A673 (cell line): ENCODE measurements at regions of chr2 and their contacts with region 1.

Region 1: DNA sequence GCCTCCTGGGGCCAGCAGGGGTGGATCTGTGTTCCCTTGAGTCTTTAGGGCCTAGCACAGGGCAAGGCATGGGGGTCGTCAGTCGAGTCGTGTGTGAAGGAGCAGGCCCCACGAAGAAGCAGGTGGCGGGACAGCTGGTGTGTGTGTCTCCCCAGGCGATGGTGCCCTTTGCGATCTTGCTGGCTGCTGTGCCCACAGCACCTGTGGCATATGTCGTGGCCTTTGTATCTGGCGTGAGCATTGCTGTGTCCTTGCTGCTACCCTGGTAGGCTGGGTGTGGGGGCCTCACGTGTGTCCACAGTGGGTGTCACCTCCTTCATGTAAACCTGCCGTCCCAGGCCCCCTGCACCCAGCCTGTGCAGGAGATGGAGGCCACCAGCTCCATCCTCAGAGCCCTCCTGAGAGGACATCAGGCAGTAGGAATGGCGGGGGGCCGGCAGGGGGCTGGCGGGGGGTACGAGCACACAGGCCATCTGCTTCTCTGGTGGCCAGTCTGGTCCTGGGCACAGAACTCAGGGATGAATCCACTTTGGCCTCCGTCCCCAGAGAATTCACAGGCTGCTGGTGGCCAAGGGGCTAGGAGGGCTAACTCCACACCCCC is 13.2 kb downstream of the MFSD2B start:
- DNase-seq: no peak
- H3K4me3 ChIP-seq: no peak overlapping the region
- H3K27ac ChIP-seq: no peak overlapping the region
- H3K4me1 ChIP-seq: peaks cover 15% of the 10 kb centered on the region
- H3K27me3 ChIP-seq: no peaks in the 10 kb centered on the region
- CTCF ChIP-seq: no peak

Region 2: DNA sequence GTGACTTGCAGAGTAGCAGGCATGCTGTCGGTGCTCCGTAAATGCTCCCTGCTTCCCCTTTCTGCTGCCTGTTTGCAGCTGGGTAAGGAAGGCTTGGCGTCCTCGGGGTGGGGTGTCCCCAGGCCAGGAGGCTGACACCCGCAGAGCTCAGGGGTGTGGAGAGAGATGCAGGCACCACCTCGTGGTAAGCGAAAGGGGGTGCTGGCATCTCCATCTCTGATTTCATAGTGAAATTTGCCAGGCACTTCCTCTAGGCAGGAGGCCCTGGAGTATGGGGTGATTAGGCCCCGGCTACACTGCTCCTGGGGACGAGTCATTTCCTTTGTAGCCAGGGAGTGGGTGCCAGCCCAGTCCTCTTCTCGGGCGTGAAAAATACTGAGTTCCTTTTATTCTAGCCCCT is 477.7 kb before region 1 on chr2:
- CTCF ChIA-PET with region 1: no interaction called
- POLR2A ChIA-PET with region 1: no interaction called
- intact Hi-C with region 1: no loop called
- DNase-seq: peak; percentile 71
- H3K4me3 ChIP-seq: no peak overlapping the region
- H3K27ac ChIP-seq: peak overlapping the region; percentile 3
- H3K4me1 ChIP-seq: peaks cover 66% of the 10 kb centered on the region
- H3K27me3 ChIP-seq: no peaks in the 10 kb centered on the region
- CTCF ChIP-seq: peak; percentile 36; the same call in 1 of the 2 replicates

Region 3: DNA sequence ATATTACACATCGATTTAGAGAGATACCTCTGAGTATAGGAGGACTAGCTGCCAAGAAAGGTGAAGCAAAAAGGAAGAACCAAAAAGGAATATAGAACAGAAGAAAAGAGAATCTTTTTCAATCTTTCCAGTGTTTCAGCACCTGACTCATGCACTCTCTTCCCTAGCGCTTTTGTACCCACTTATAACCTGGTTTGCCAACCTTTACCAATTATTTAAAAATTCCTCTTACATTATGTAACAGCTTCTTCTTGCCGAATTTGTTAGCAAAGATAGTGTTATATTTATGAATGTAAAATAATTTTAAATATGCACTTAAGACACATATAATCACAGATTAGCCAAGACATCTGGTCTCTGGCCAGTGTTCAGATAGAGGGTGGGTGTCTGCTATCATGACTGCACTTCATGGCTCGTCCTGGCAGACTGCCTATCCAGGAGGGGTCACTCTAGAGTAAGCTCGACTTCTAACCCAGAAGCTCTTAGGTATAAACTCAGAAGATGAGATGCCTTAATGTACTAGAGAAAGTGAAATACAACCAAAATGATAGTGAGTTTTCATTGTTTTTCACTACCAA is 219.0 kb before region 1 on chr2:
- CTCF ChIA-PET with region 1: no interaction called
- POLR2A ChIA-PET with region 1: interaction called, 11 read pairs
- intact Hi-C with region 1: no loop called
- DNase-seq: peak; percentile 63
- H3K4me3 ChIP-seq: no peak overlapping the region
- H3K27ac ChIP-seq: no peak overlapping the region
- H3K4me1 ChIP-seq: no peaks in the 10 kb centered on the region
- H3K27me3 ChIP-seq: no peaks in the 10 kb centered on the region
- CTCF ChIP-seq: peak; percentile 58

Region 4: DNA sequence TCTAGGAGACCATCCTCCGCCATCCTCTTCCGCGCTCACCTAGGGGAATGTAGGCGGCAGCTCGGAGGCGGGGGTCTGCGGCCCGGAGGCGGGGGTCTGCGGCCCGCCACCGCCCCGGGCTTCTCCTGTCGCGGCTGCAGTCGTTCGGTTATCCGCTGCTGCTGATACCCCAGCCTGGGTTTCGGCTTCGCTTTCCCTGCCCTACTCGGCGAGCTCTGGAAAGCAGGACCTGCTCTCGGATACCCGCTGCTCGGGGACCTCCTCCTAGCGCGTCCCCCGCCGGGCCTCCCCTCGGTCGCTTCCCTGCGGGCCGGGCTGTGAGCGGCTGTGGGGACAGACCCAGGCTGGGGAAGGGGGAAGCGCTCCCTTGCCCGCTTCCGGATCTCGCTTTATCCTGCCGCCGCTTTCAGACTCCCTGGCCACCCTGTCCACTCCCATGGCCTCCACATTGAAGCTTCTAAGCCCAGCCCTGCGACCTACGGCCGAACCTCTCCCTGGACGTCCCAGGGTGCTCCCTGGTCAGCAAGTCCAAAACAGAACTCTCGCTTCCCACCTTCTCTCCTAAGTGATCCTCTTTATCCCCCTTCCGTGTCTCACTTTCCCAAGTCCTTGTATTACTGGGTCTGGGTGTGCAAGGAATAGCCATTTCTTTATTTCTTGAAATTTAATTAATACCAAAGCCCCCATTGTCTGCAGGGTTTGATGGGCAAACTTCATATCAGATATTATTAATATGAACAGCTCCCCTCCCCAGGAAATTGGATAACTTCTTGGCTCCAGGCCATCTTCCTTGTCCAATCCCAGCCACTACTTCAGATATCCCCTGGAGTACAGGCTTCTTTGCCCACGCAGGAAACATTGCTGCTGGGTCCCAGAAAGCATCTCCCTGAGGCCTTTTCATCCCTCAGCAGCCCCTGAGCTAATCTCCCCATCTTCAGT is 27.2 kb after region 1 on chr2:
- CTCF ChIA-PET with region 1: interaction called, 10 read pairs
- POLR2A ChIA-PET with region 1: no interaction called
- intact Hi-C with region 1: no loop called
- DNase-seq: peak; percentile 50
- H3K4me3 ChIP-seq: peak overlapping the region; percentile 91
- H3K27ac ChIP-seq: no peak overlapping the region
- H3K4me1 ChIP-seq: peaks cover 17% of the 10 kb centered on the region
- H3K27me3 ChIP-seq: no peaks in the 10 kb centered on the region
- CTCF ChIP-seq: no peak

Region 5: GRCh38 chr2:24181849-24182248 is 158.8 kb after region 1 on chr2:
- CTCF ChIA-PET with region 1: no interaction called
- POLR2A ChIA-PET with region 1: no interaction called
- intact Hi-C with region 1: no loop called
- DNase-seq: peak; percentile 24
- H3K4me3 ChIP-seq: no peak overlapping the region
- H3K27ac ChIP-seq: no peak overlapping the region
- H3K4me1 ChIP-seq: no peaks in the 10 kb centered on the region
- H3K27me3 ChIP-seq: no peaks in the 10 kb centered on the region
- CTCF ChIP-seq: no peak

Region 6: GRCh38 chr2:25431604-25432003 is 1408.5 kb after region 1 on chr2:
- CTCF ChIA-PET with region 1: no interaction called
- POLR2A ChIA-PET with region 1: no interaction called
- intact Hi-C with region 1: no loop called
- DNase-seq: no peak
- H3K4me3 ChIP-seq: no peak overlapping the region
- H3K27ac ChIP-seq: no peak overlapping the region
- H3K4me1 ChIP-seq: no peaks in the 10 kb centered on the region
- H3K27me3 ChIP-seq: no peaks in the 10 kb centered on the region
- CTCF ChIP-seq: no peak